Heart left ventricle (tissue), 16 donors: ENCODE measurements at regions of chr17 and their contacts with region 1.

Region 1: GRCh38 chr17:46764709-46765401 is 53.6 kb downstream of the WNT3 start:
- DNase-seq: peak; percentile 69 to 83 (median 80)
- ATAC-seq: peak; percentile 83 to 94 (median 91)
- H3K4me3 ChIP-seq: no peak overlapping the region
- H3K27ac ChIP-seq: peak overlapping the region; percentile 24 to 64 (median 44)
- H3K4me1 ChIP-seq: peaks cover 7 to 24% (median 18%) of the 10 kb centered on the region in 12 donors
- H3K27me3 ChIP-seq: peaks cover 0 to 7% (median 0%) of the 10 kb centered on the region in 9 donors
- CTCF ChIP-seq: no peak
- POLR2A ChIP-seq: no peak

Region 2: GRCh38 chr17:46719891-46720290 is 45.0 kb before region 1 on chr17:
- intact Hi-C with region 1: loop called in 1 of 10 experiments (anchors 10 kb)
- DNase-seq: no peak
- ATAC-seq: no peak
- H3K4me3 ChIP-seq: no peak overlapping the region
- H3K27ac ChIP-seq: no peak overlapping the region
- H3K4me1 ChIP-seq: peaks cover 0 to 12% (median 0%) of the 10 kb centered on the region in 12 donors
- H3K27me3 ChIP-seq: no peaks in the 10 kb centered on the region
- CTCF ChIP-seq: no peak
- POLR2A ChIP-seq: no peak

Region 3: DNA sequence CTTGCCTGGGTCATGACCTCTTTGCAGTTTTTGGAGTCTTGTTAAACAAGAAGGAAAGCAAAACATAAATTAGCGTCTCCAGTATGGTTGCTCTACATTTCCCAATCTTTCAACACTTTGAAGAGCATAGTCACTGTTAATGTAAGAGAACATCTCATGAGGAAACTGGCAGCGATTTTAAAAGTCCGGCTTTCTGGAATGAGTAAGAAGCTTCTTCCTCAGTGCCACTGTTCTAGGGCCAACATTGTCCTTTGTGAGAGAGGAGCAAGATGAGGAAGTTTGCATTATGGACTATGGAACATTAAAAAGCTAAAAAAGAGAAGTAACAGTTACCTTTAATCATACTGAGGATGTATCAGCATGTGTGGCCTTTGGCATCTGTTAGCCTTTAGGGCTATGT is 19.5 kb before region 1 on chr17:
- intact Hi-C with region 1: loop called in 1 of 10 experiments (anchors 2 kb)
- DNase-seq: no peak
- ATAC-seq: no peak
- H3K4me3 ChIP-seq: no peak overlapping the region
- H3K27ac ChIP-seq: no peak overlapping the region
- H3K4me1 ChIP-seq: peaks cover 0 to 10% (median 0%) of the 10 kb centered on the region in 12 donors
- H3K27me3 ChIP-seq: no peaks in the 10 kb centered on the region
- CTCF ChIP-seq: no peak
- POLR2A ChIP-seq: no peak

Region 4: GRCh38 chr17:46818319-46818928 is 53.6 kb after region 1 on chr17 and contains the start of gene WNT3:
- intact Hi-C with region 1: loop called in 1 of 10 experiments (anchors 10 kb)
- DNase-seq: peak in 1 of 5 donors; percentile 72
- ATAC-seq: no peak
- H3K4me3 ChIP-seq: peak within 1 kb of the TSS; percentile 8 to 53 (median 38)
- H3K27ac ChIP-seq: no peak within 1 kb of the TSS
- H3K4me1 ChIP-seq: peaks cover 0 to 35% (median 19%) of the 10 kb centered on the region in 12 donors
- H3K27me3 ChIP-seq: peaks cover 48 to 96% (median 70%) of the 10 kb centered on the region in 9 donors
- CTCF ChIP-seq: no peak
- POLR2A ChIP-seq: no peak
- total RNA-seq, gene WNT3: 0.32 to 2.2 (median 1.2) TPM